GM18951 (cell line): ENCODE measurements at regions of chr5 and their contacts with region 1.

Region 1: GRCh38 chr5:149452007-149452664 is 73.0 kb upstream of the IL17B start:
- POLR2A ChIP-seq: no peak

Region 2: GRCh38 chr5:149317281-149318048 is 134.7 kb before region 1 on chr5:
- in situ Hi-C with region 1: no loop called
- POLR2A ChIP-seq: no peak

Region 3: DNA sequence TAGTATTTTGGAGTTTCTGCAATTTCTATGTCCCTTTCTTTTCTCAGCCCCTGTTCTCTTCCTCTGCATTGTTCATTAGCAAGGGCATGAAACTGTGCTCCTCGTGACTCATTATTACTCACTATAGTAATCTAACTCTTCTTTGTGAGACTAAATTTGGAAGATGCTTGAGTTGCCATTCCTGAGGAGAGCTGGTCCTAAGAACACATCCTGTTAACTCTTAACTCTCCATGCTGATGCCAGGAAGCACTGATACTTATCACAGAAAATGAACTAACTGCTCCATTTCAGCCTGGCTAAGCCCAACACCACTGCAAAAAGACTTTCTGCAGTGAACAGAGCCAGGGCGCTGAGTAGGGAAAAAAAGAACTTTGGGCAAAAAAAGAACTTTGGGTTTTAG is 109.7 kb after region 1 on chr5:
- in situ Hi-C with region 1: loop called (anchors 10 kb)
- POLR2A ChIP-seq: no peak